IMR-90 (cell line): ENCODE measurements at regions of chr22 and their contacts with region 1.

Region 1: GRCh38 chr22:39214383-39215069 is 30.3 kb downstream of the PDGFB start:
- DNase-seq: peak; percentile 36
- ATAC-seq: peak; percentile 64
- H3K4me3 ChIP-seq: no peak overlapping the region
- H3K27ac ChIP-seq: no peak overlapping the region
- H3K4me1 ChIP-seq: peaks cover 5% of the 10 kb centered on the region
- H3K27me3 ChIP-seq: no peaks in the 10 kb centered on the region; the same call in 1 of the 2 replicates
- CTCF ChIP-seq: no peak
- POLR2A ChIP-seq: no peak
- RAD21 ChIP-seq: no peak

Region 2: DNA sequence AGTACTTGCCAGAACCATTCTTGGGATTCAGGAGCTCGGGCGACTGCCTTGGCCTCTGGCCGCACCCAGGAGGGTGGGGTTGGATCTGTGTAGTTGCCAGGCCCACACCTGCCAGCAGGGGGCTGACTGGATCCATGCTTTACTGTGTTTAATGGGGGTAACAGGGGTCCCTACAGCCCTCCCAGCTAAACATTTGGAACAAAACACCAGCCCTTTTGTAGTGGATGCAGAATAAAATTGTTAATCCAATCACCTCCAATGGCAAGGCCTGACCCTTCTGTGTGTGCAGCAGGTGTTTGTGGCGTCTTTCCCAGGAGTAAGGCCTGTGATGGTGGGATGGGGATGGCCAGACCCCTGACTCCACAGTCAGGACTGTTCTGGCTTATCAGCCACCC is 481.2 kb before region 1 on chr22:
- CTCF ChIA-PET with region 1: no interaction called
- POLR2A ChIA-PET with region 1: no interaction called
- dilution Hi-C with region 1: no loop called
- in situ Hi-C with region 1: no loop called
- intact Hi-C with region 1: no loop called
- DNase-seq: no peak
- ATAC-seq: peak; percentile 53
- H3K4me3 ChIP-seq: no peak overlapping the region
- H3K27ac ChIP-seq: no peak overlapping the region
- H3K4me1 ChIP-seq: peaks cover 5% of the 10 kb centered on the region
- H3K27me3 ChIP-seq: no peaks in the 10 kb centered on the region
- CTCF ChIP-seq: peak; percentile 54
- POLR2A ChIP-seq: no peak
- RAD21 ChIP-seq: peak; percentile 34; the same call in 1 of the 2 replicates

Region 3: GRCh38 chr22:38788021-38788816 is 426.3 kb before region 1 on chr22:
- CTCF ChIA-PET with region 1: no interaction called
- POLR2A ChIA-PET with region 1: interaction called, 10 read pairs
- dilution Hi-C with region 1: no loop called
- in situ Hi-C with region 1: no loop called
- intact Hi-C with region 1: no loop called
- DNase-seq: peak; percentile 96
- ATAC-seq: peak; percentile 91
- H3K4me3 ChIP-seq: no peak overlapping the region
- H3K27ac ChIP-seq: peak overlapping the region; percentile 28; the same call in 1 of the 2 replicates
- H3K4me1 ChIP-seq: peaks cover 16% of the 10 kb centered on the region
- H3K27me3 ChIP-seq: no peaks in the 10 kb centered on the region
- CTCF ChIP-seq: no peak
- POLR2A ChIP-seq: no peak
- RAD21 ChIP-seq: no peak

Region 4: DNA sequence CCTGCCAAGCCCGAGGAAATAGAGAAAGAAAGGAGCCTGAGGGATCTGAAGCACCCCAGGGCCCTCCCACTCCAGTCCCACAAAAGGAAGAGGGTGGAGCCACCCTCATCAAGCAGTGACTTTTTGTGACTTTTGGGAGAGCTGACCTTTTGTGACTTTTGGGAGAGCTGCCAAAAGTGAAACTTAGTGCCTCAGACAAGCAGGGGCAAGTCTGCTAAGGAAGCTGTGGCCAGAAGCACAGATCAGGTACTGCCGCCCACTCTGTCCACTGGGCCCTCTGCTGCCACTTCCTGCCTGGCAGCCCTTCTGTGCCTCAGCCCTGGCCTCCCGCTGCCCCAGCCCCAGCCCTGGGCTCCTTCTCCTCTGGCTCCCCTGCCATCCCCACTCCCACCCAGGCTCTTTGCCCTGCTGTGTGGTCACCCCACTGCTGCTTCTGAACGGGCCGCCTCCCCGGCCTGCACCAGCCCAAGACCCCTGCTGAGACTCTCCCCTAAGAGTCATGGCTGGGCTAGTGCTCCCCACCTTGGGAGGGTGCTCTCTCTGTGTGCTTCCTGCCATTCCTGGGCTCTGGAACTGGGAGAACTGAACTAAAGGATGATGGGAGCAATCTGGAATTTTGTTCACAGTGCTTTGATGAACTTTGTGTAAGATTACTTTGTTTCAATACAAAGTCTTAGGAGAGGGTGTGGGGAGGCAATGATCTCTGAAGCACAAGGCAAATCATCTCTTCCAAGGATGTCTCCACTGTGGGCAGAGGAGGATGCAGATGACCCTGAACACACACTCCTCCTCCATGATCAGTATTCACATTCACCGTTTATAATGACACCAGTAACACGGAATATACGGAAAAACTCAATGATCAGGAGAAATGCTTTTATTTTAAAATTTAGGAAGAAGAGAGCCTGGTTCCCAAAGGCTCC is 117.2 kb before region 1 on chr22 and contains the start of gene APOBEC3H:
- CTCF ChIA-PET with region 1: no interaction called
- POLR2A ChIA-PET with region 1: no interaction called
- dilution Hi-C with region 1: no loop called
- in situ Hi-C with region 1: no loop called
- intact Hi-C with region 1: no loop called
- DNase-seq: no peak
- ATAC-seq: peak; percentile 32
- H3K4me3 ChIP-seq: no peak within 1 kb of the TSS
- H3K27ac ChIP-seq: peak within 1 kb of the TSS; percentile 13; the same call in 1 of the 2 replicates
- H3K4me1 ChIP-seq: peaks cover 4% of the 10 kb centered on the region
- H3K27me3 ChIP-seq: peaks cover 30% of the 10 kb centered on the region
- CTCF ChIP-seq: no peak
- POLR2A ChIP-seq: no peak
- RAD21 ChIP-seq: no peak
- total RNA-seq, gene APOBEC3H: 0.18 TPM in 1 of 2 replicates, not detected in the other

Region 5: DNA sequence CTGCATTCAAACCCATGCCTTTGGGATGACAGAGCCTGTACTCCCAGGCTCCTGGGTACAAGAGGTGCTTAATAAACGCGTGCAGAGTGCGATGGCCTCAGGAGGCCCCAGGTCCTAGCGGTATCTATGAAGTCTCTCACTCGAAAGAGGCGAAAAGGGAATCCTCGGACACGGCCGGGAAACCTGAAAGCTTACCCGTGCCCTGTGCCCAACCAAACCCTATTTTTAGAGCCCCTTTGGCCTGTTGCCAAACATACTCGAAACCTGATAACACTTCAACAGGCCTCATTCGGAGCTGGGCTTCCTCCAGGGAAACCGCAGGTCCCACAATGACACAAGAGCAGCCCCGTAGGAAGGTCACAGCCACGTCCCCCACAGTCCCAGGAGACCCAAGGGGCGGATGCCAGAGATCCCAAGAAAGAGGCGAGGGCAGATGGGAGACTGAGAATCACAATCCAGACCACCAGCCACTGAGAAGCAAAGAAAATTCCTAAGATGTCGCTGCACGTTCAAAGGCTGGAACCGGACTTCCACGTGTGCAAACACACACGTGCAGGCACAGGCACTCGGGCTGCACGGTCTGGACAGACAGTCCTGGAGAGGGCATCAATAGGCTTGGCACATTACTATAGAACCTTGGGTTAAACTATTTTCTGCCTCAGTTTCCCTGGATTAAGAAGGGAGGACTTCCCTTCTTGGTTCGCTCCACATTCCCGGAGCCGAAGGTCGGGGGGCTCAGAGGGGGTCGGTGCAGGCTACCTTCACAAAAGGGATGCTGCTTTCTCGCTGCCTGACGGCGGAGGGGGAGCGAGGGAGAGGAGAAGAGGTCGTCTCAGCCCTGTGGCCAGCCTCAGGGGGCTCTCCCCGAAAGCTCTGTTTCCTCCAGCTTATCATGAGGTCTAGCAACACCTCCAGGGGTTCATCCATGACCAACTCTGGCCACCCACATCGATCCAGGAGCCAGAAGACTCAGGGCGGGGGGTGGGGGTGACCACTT is 22.1 kb after region 1 on chr22:
- CTCF ChIA-PET with region 1: no interaction called
- POLR2A ChIA-PET with region 1: no interaction called
- dilution Hi-C with region 1: no loop called
- in situ Hi-C with region 1: no loop called
- intact Hi-C with region 1: no loop called
- DNase-seq: no peak
- ATAC-seq: no peak
- H3K4me3 ChIP-seq: no peak overlapping the region
- H3K27ac ChIP-seq: no peak overlapping the region
- H3K4me1 ChIP-seq: no peaks in the 10 kb centered on the region
- H3K27me3 ChIP-seq: peaks cover 11% of the 10 kb centered on the region; the same call in 1 of the 2 replicates
- CTCF ChIP-seq: no peak
- POLR2A ChIP-seq: no peak
- RAD21 ChIP-seq: no peak